ENCODE measurements at regions of chr2 and their contacts with region 1.

Region 1: GRCh38 chr2:108594132-108594981 is 60.1 kb downstream of the LIMS1 start:
- DNase-seq: peak; percentile 72
- H3K4me3 Mint-ChIP-seq: peak overlapping the region; percentile 20
- H3K27ac Mint-ChIP-seq: peak overlapping the region; percentile 77
- H3K4me1 Mint-ChIP-seq: peaks cover 63% of the 10 kb centered on the region
- H3K27me3 Mint-ChIP-seq: no peaks in the 10 kb centered on the region
- CTCF ChIP-seq: no peak

Region 2: GRCh38 chr2:108533832-108534583 is 60.3 kb before region 1 on chr2 and contains the start of gene LIMS1:
- CTCF ChIA-PET with region 1: interaction called, 5 read pairs
- POLR2A ChIA-PET with region 1: interaction called, 53 read pairs
- intact Hi-C with region 1: no loop called
- DNase-seq: peak; percentile 90
- H3K4me3 Mint-ChIP-seq: peak within 1 kb of the TSS; percentile 90
- H3K27ac Mint-ChIP-seq: peak within 1 kb of the TSS; percentile 83
- H3K4me1 Mint-ChIP-seq: peaks cover 34% of the 10 kb centered on the region
- H3K27me3 Mint-ChIP-seq: no peaks in the 10 kb centered on the region
- CTCF ChIP-seq: no peak
- total RNA-seq, gene LIMS1: 70.9 and 74.9 TPM in 2 replicates

Region 3: GRCh38 chr2:108575132-108575966 is 19.0 kb before region 1 on chr2:
- CTCF ChIA-PET with region 1: interaction called, 6 read pairs
- POLR2A ChIA-PET with region 1: interaction called, 30 read pairs
- intact Hi-C with region 1: no loop called
- DNase-seq: peak; percentile 59
- H3K4me3 Mint-ChIP-seq: peak overlapping the region; percentile 3
- H3K27ac Mint-ChIP-seq: peak overlapping the region; percentile 65
- H3K4me1 Mint-ChIP-seq: peaks cover 60% of the 10 kb centered on the region
- H3K27me3 Mint-ChIP-seq: no peaks in the 10 kb centered on the region
- CTCF ChIP-seq: no peak

Region 4: GRCh38 chr2:108621087-108621559 is 26.8 kb after region 1 on chr2:
- CTCF ChIA-PET with region 1: interaction called, 3 read pairs
- POLR2A ChIA-PET with region 1: interaction called, 23 read pairs
- intact Hi-C with region 1: loop called (anchors 2 kb)
- DNase-seq: peak; percentile 71
- H3K4me3 Mint-ChIP-seq: peak overlapping the region; percentile 67
- H3K27ac Mint-ChIP-seq: peak overlapping the region; percentile 78
- H3K4me1 Mint-ChIP-seq: peaks cover 40% of the 10 kb centered on the region
- H3K27me3 Mint-ChIP-seq: no peaks in the 10 kb centered on the region
- CTCF ChIP-seq: no peak

Region 5: DNA sequence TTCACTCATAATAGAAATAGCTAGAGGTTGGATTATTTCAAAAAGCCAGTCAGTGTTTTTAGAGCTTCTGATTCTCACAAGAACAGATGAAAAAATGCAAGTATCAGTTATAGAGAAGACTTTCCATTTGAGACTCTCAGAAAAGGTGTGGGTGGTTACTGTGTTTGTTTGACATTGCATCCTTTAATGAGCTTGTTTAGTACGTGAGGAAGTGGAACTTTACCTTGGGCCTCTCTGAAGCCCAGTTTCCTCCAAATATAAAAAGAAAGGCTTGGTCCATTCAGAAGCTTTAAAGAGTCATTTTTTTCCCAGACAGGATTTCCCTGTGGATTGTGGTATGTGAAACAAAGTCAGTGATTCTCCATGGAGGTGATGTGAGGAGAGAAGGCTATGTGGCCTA is 35.1 kb after region 1 on chr2:
- CTCF ChIA-PET with region 1: interaction called, 120 read pairs
- POLR2A ChIA-PET with region 1: interaction called, 11 read pairs
- intact Hi-C with region 1: no loop called
- DNase-seq: no peak
- H3K4me3 Mint-ChIP-seq: no peak overlapping the region
- H3K27ac Mint-ChIP-seq: no peak overlapping the region
- H3K4me1 Mint-ChIP-seq: peaks cover 37% of the 10 kb centered on the region
- H3K27me3 Mint-ChIP-seq: no peaks in the 10 kb centered on the region
- CTCF ChIP-seq: no peak

Region 6: GRCh38 chr2:109322111-109322510 is 727.8 kb after region 1 on chr2:
- CTCF ChIA-PET with region 1: no interaction called
- POLR2A ChIA-PET with region 1: no interaction called
- intact Hi-C with region 1: no loop called
- DNase-seq: peak; percentile 97
- H3K4me3 Mint-ChIP-seq: peak overlapping the region; percentile 63
- H3K27ac Mint-ChIP-seq: peak overlapping the region; percentile 71
- H3K4me1 Mint-ChIP-seq: peaks cover 51% of the 10 kb centered on the region
- H3K27me3 Mint-ChIP-seq: no peaks in the 10 kb centered on the region
- CTCF ChIP-seq: no peak